ENCODE measurements at regions of chr13 and their contacts with region 1.

Region 1: GRCh38 chr13:89361909-89362308 is 1690.7 kb downstream of the SLITRK5 start:
- DNase-seq: no peak
- ATAC-seq: no peak

Region 2: GRCh38 chr13:89066868-89067466 is 294.9 kb before region 1 on chr13:
- intact Hi-C with region 1: no loop called
- DNase-seq: no peak
- ATAC-seq: peak in 1 of 2 donors; percentile 63

Region 3: DNA sequence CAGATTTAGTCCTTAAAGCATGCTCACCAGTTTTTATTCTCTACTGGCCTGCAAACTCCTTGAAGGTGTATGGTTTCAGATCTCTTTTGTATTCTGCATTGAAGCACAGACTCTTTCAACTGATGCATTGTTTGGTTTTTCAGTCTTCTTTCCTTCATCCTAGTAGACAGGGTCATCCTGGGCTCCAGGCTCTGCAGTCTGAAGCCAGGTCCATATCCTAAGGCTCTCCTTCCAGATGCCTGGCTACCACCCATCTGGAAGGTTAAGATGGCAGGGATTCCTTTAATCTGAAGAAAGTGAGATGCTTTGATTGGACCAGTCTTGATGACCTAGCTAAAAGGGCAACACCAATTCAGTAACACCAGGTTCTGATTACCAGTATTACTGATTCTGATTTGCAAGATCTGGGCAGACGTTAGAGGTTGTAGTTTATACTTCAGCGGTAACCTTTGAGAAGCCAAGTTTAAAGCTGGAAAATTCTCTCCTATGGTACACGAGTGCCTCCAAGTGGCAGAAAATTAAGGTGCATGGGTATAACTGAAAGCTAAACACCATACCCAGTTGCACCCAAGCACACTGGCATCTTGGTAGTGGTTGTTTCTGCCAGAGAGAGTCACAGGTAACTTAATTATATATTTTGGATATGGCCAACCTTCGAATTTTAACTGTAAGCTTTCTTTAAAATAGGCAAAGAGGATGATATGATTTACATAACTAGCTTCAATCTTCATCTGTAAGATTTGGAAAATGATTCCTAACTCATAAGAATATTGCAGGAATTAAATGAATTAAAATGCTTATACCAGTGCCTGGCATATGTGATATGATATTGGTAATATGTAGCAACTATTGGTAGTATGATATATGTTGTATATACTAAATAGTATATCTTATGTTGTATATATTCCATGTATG is 333.7 kb after region 1 on chr13:
- intact Hi-C with region 1: loop called in 1 of 2 experiments (anchors 10 kb)
- DNase-seq: no peak
- ATAC-seq: peak in 1 of 2 donors; percentile 46